ENCODE measurements at regions of chr18 and their contacts with region 1.

Region 1: DNA sequence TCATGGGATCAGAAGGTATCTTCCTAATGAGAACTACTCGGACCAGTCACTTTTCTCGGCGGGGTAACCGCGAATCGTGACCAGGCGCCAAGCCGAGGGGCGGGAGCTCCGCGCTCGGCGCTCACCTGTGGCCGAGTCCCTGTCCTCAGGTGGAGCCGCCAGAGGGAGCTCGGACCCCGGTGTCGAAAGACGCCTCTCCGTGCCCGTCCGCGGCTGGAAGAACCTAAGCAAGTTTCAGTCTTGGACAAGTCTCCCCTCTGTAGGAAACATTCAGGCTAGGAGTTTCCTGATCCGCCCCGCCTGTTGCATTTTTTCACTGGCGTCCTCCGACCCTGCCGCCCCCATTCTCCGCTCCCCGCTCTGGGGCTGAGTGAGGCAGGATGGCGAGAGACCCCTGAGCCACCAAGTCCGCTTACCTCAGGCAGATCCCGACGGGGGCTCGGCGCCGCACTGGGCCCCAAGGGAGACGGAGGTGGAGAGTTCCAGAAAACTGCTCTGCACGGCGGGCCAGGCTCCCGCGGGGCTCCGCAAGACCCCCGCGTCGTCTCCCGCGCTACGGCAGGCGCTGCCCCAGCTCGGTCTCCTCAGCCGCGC is 478 bp downstream of the DSEL start:
- DNase-seq: peak; percentile 93
- ATAC-seq: peak; percentile 70
- H3K4me3 ChIP-seq: peak overlapping the region; percentile 99
- H3K27ac ChIP-seq: peak overlapping the region; percentile 42; the same call in 1 of the 2 replicates
- H3K4me1 ChIP-seq: peaks cover 26% of the 10 kb centered on the region
- H3K27me3 ChIP-seq: no peaks in the 10 kb centered on the region
- CTCF ChIP-seq: peak; percentile 83

Region 2: DNA sequence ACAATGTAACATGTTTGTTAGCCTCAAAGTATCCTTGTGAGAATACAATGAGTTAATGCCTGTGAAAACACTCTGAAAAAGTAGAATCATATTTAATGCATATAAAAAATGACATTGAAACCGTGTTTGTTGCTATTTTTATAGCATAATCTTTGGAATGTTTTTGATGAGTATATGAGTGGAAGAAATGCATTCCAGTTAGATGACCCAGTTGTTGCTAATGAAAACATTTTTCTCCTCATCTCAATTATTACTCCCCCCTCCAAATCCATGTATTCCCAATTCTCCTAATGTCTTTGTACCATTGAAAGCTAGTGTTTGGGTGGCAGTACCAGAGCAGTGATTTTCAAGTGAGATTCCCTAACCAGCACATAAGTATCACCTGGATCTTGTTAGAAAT is 67.6 kb after region 1 on chr18:
- CTCF ChIA-PET with region 1: no interaction called
- POLR2A ChIA-PET with region 1: no interaction called
- intact Hi-C with region 1: no loop called
- DNase-seq: peak; percentile 11
- ATAC-seq: no peak
- H3K4me3 ChIP-seq: no peak overlapping the region
- H3K27ac ChIP-seq: no peak overlapping the region
- H3K4me1 ChIP-seq: no peaks in the 10 kb centered on the region
- H3K27me3 ChIP-seq: no peaks in the 10 kb centered on the region
- CTCF ChIP-seq: no peak

Region 3: DNA sequence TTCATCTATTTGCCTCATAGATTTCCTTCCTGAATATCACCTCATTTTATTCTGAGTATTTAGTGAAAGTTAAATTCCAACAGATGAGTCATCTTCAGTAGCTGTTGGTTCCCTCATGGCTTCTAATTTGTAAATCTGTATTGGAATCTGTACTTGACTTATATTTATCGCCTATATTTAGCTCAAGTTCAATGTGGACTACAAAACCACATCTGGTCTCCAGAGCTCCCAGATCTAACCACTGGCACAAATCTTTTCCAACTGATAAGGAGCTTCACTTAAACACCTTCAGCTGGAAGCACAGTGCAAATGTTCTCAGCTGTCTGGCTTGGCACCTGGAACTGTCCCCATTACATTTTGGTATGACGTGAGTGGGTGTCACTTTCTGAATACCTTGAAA is 83.2 kb after region 1 on chr18:
- CTCF ChIA-PET with region 1: no interaction called
- POLR2A ChIA-PET with region 1: no interaction called
- intact Hi-C with region 1: loop called (anchors 5 kb)
- DNase-seq: peak; percentile 35
- ATAC-seq: peak; percentile 40; the same call in 1 of the 2 replicates
- H3K4me3 ChIP-seq: no peak overlapping the region
- H3K27ac ChIP-seq: no peak overlapping the region
- H3K4me1 ChIP-seq: peaks cover 33% of the 10 kb centered on the region
- H3K27me3 ChIP-seq: no peaks in the 10 kb centered on the region
- CTCF ChIP-seq: no peak

Region 4: GRCh38 chr18:67783196-67783946 is 267.3 kb after region 1 on chr18:
- CTCF ChIA-PET with region 1: no interaction called
- POLR2A ChIA-PET with region 1: no interaction called
- intact Hi-C with region 1: loop called (anchors 2 kb)
- DNase-seq: peak; percentile 96
- ATAC-seq: peak; percentile 95
- H3K4me3 ChIP-seq: no peak overlapping the region
- H3K27ac ChIP-seq: peak overlapping the region; percentile 88
- H3K4me1 ChIP-seq: peaks cover 20% of the 10 kb centered on the region
- H3K27me3 ChIP-seq: no peaks in the 10 kb centered on the region
- CTCF ChIP-seq: no peak

Region 5: GRCh38 chr18:67932271-67932670 is 416.2 kb after region 1 on chr18:
- CTCF ChIA-PET with region 1: no interaction called
- POLR2A ChIA-PET with region 1: no interaction called
- intact Hi-C with region 1: loop called (anchors 5 kb)
- DNase-seq: no peak
- ATAC-seq: no peak
- H3K4me3 ChIP-seq: no peak overlapping the region
- H3K27ac ChIP-seq: no peak overlapping the region
- H3K4me1 ChIP-seq: peaks cover 16% of the 10 kb centered on the region
- H3K27me3 ChIP-seq: no peaks in the 10 kb centered on the region
- CTCF ChIP-seq: no peak

Region 6: GRCh38 chr18:68454511-68455228 is 938.6 kb after region 1 on chr18:
- CTCF ChIA-PET with region 1: no interaction called
- POLR2A ChIA-PET with region 1: no interaction called
- intact Hi-C with region 1: loop called (anchors 10 kb)
- DNase-seq: peak; percentile 36
- ATAC-seq: no peak
- H3K4me3 ChIP-seq: no peak overlapping the region
- H3K27ac ChIP-seq: no peak overlapping the region
- H3K4me1 ChIP-seq: peaks cover 27% of the 10 kb centered on the region
- H3K27me3 ChIP-seq: no peaks in the 10 kb centered on the region
- CTCF ChIP-seq: no peak

Region 7: GRCh38 chr18:68735483-68736343 is 1219.7 kb after region 1 on chr18:
- CTCF ChIA-PET with region 1: no interaction called
- POLR2A ChIA-PET with region 1: no interaction called
- intact Hi-C with region 1: loop called (anchors 5 kb)
- DNase-seq: peak; percentile 66
- ATAC-seq: peak; percentile 70
- H3K4me3 ChIP-seq: no peak overlapping the region
- H3K27ac ChIP-seq: 0 out of 2 replicates have a peak overlapping the region, but pooled peaks have one; percentile 5
- H3K4me1 ChIP-seq: peaks cover 21% of the 10 kb centered on the region
- H3K27me3 ChIP-seq: no peaks in the 10 kb centered on the region
- CTCF ChIP-seq: peak; percentile 91

Measured in PC-3 (cell line).